ENCODE measurements at regions of chr20 and their contacts with region 1.

Region 1: DNA sequence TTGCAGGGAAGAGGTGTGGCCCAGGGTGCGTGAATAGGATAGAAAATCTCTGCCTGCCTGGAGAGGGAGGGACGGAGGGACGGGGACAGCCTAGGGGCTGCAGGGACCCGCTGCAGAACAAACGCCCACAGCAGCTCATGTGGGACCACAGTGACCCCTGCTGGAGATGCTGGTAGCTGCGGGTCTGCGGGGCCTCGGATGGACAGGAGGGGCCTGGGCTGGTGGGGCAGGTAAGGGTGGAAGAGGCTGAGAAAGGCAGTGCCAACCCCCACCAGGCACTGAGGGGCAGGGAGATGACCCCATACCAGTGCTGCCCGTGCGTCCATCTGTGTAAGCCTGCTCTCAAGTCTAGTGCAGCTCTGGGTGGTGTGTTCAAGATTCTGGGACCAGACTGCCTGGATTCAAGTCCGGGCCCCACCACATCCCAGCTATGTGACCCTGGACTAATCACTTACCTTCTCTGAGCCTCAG is 39.4 kb downstream of the KIAA1755 start:
- DNase-seq: peak; percentile 70
- ATAC-seq: peak; percentile 87
- H3K4me3 ChIP-seq: no peak overlapping the region
- H3K27ac ChIP-seq: no peak overlapping the region
- H3K4me1 ChIP-seq: peaks cover 18% of the 10 kb centered on the region; the same call in 1 of the 2 replicates
- H3K27me3 ChIP-seq: peaks cover 5 to 46% of the 10 kb centered on the region in 2 experiments; a peak in 4 of 5 replicates
- CTCF ChIP-seq: peak; percentile 100
- EP300 ChIP-seq: no peak
- POLR2A ChIP-seq: no peak
- RAD21 ChIP-seq: peak; percentile 98

Region 2: GRCh38 chr20:37564388-37565133 is 656.6 kb before region 1 on chr20:
- CTCF ChIA-PET with region 1: no interaction called
- POLR2A ChIA-PET with region 1: no interaction called
- in situ Hi-C with region 1: loop called (anchors 25 kb)
- intact Hi-C with region 1: no loop called
- DNase-seq: peak; percentile 30
- ATAC-seq: peak; percentile 87
- H3K4me3 ChIP-seq: peak overlapping the region in 2 of 3 experiments; percentile 12 to 50; a peak in 2 of 6 replicates
- H3K27ac ChIP-seq: no peak overlapping the region
- H3K4me1 ChIP-seq: peaks cover 33% of the 10 kb centered on the region
- H3K27me3 ChIP-seq: peaks cover 6 to 65% of the 10 kb centered on the region in 2 experiments; a peak in 4 of 5 replicates
- CTCF ChIP-seq: peak; percentile 99
- EP300 ChIP-seq: no peak
- POLR2A ChIP-seq: no peak
- RAD21 ChIP-seq: peak; percentile 99

Region 3: GRCh38 chr20:38057351-38057972 is 163.7 kb before region 1 on chr20:
- CTCF ChIA-PET with region 1: interaction called, 140 read pairs
- POLR2A ChIA-PET with region 1: interaction called, 3 read pairs
- in situ Hi-C with region 1: loop called (anchors 5 kb)
- intact Hi-C with region 1: loop called (anchors 1 kb)
- DNase-seq: peak; percentile 88
- ATAC-seq: peak; percentile 98
- H3K4me3 ChIP-seq: no peak overlapping the region
- H3K27ac ChIP-seq: no peak overlapping the region
- H3K4me1 ChIP-seq: peaks cover 22% of the 10 kb centered on the region
- H3K27me3 ChIP-seq: no peaks in the 10 kb centered on the region
- CTCF ChIP-seq: peak; percentile 98
- EP300 ChIP-seq: no peak
- POLR2A ChIP-seq: no peak
- RAD21 ChIP-seq: peak; percentile 89

Region 4: GRCh38 chr20:38113401-38114325 is 107.5 kb before region 1 on chr20:
- CTCF ChIA-PET with region 1: interaction called, 3 read pairs
- POLR2A ChIA-PET with region 1: interaction called, 4 read pairs
- in situ Hi-C with region 1: no loop called
- intact Hi-C with region 1: loop called (anchors 2 kb)
- DNase-seq: peak; percentile 78
- ATAC-seq: peak; percentile 73
- H3K4me3 ChIP-seq: no peak overlapping the region
- H3K27ac ChIP-seq: no peak overlapping the region
- H3K4me1 ChIP-seq: peaks cover 51% of the 10 kb centered on the region
- H3K27me3 ChIP-seq: no peaks in the 10 kb centered on the region
- CTCF ChIP-seq: peak; percentile 81
- EP300 ChIP-seq: no peak
- POLR2A ChIP-seq: no peak
- RAD21 ChIP-seq: peak; percentile 78

Region 5: GRCh38 chr20:38187512-38187911 is 33.6 kb before region 1 on chr20:
- CTCF ChIA-PET with region 1: interaction called, 3 read pairs
- POLR2A ChIA-PET with region 1: no interaction called
- in situ Hi-C with region 1: no loop called
- intact Hi-C with region 1: loop called (anchors 5 kb)
- DNase-seq: peak; percentile 72
- ATAC-seq: peak; percentile 96
- H3K4me3 ChIP-seq: no peak overlapping the region
- H3K27ac ChIP-seq: no peak overlapping the region
- H3K4me1 ChIP-seq: no peaks in the 10 kb centered on the region
- H3K27me3 ChIP-seq: peaks cover 6 to 46% of the 10 kb centered on the region in 2 experiments; a peak in 4 of 5 replicates
- CTCF ChIP-seq: peak; percentile 50
- EP300 ChIP-seq: no peak
- POLR2A ChIP-seq: no peak
- RAD21 ChIP-seq: peak; percentile 31; the same call in 1 of the 2 replicates

Region 6: DNA sequence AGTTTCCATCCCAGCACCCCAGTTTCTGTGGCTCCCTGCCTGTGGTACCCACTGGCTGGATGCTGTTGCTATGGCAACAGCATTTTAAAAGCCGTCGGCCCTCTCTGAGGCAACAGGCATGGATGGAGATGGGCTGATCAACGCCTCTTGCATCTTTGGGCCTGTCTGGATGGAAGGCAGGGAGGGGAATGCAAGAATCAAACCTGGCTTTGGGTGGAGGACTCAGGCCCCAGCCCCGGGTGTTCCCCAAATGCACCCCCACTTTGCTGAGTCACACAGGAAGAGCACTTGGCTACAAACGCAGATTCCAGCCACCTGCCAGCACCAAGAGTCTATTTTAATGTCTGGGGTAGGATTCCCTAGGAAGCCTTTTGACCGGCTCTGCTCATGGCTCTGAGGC is 10.4 kb before region 1 on chr20:
- CTCF ChIA-PET with region 1: no interaction called
- POLR2A ChIA-PET with region 1: no interaction called
- in situ Hi-C with region 1: no loop called
- intact Hi-C with region 1: no loop called
- DNase-seq: no peak
- ATAC-seq: no peak
- H3K4me3 ChIP-seq: no peak overlapping the region
- H3K27ac ChIP-seq: no peak overlapping the region
- H3K4me1 ChIP-seq: no peaks in the 10 kb centered on the region
- H3K27me3 ChIP-seq: peaks cover 4 to 29% of the 10 kb centered on the region in 2 experiments; a peak in 3 of 5 replicates
- CTCF ChIP-seq: no peak
- EP300 ChIP-seq: no peak
- POLR2A ChIP-seq: no peak
- RAD21 ChIP-seq: no peak

Measured in HepG2 (cell line).